ENCODE measurements at regions of chr3 and their contacts with region 1.

Region 1: GRCh38 chr3:27134165-27134796 is 234.9 kb downstream of the NEK10 start:
- DNase-seq: peak; percentile 43 to 53
- ATAC-seq: peak; percentile 79 to 86
- H3K4me3 ChIP-seq: no peak overlapping the region
- H3K27ac ChIP-seq: peak overlapping the region; percentile 16 to 54 (median 25)
- H3K4me1 ChIP-seq: peaks cover 9 to 10% of the 10 kb centered on the region in 2 donors
- H3K27me3 ChIP-seq: no peaks in the 10 kb centered on the region
- CTCF ChIP-seq: peak; percentile 64 to 89 (median 77)
- POLR2A ChIP-seq: no peak

Region 2: GRCh38 chr3:27253831-27254230 is 119.5 kb after region 1 on chr3:
- in situ Hi-C with region 1: no loop called
- intact Hi-C with region 1: loop called (anchors 2 kb)
- DNase-seq: no peak
- ATAC-seq: no peak
- H3K4me3 ChIP-seq: no peak overlapping the region
- H3K27ac ChIP-seq: no peak overlapping the region
- H3K4me1 ChIP-seq: no peaks in the 10 kb centered on the region
- H3K27me3 ChIP-seq: no peaks in the 10 kb centered on the region
- CTCF ChIP-seq: peak in 2 of 5 experiments; percentile 20 to 23
- POLR2A ChIP-seq: no peak

Region 3: DNA sequence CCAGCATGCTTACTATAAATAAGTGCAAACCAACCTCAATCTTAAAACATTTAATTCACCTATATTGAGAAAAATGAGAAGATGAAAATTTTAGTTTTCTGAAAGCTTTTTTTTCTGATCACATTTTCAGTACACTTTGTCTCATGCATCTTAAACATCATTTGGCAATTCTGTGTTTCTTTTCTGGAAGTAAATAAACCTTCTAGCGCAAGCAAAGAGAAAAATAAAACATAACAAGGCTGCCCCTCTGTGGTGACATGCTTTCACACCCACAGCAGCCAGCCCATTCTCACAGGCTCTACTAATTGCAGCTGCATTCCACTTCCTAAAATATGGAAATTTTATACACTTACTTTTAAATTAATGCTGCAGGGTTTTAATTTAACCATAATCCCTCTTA is 144.8 kb after region 1 on chr3:
- in situ Hi-C with region 1: loop called in 2 of 4 experiments (anchors 10 kb)
- intact Hi-C with region 1: loop called (anchors 2 kb)
- DNase-seq: no peak
- ATAC-seq: no peak
- H3K4me3 ChIP-seq: no peak overlapping the region
- H3K27ac ChIP-seq: no peak overlapping the region
- H3K4me1 ChIP-seq: no peaks in the 10 kb centered on the region
- H3K27me3 ChIP-seq: no peaks in the 10 kb centered on the region
- CTCF ChIP-seq: peak in 1 of 5 experiments; percentile 24
- POLR2A ChIP-seq: no peak

Region 4: GRCh38 chr3:27349832-27350231 is 215.6 kb after region 1 on chr3:
- in situ Hi-C with region 1: no loop called
- intact Hi-C with region 1: no loop called
- DNase-seq: no peak
- ATAC-seq: no peak
- H3K4me3 ChIP-seq: no peak overlapping the region
- H3K27ac ChIP-seq: peak overlapping the region in 2 of 4 donors; percentile 9 to 49
- H3K4me1 ChIP-seq: peaks cover 16 to 25% of the 10 kb centered on the region in 2 donors
- H3K27me3 ChIP-seq: no peaks in the 10 kb centered on the region
- CTCF ChIP-seq: no peak
- POLR2A ChIP-seq: no peak

Region 5: GRCh38 chr3:27467545-27467944 is 333.3 kb after region 1 on chr3:
- in situ Hi-C with region 1: loop called in 1 of 4 experiments (anchors 25 kb)
- intact Hi-C with region 1: no loop called
- DNase-seq: no peak
- ATAC-seq: peak; percentile 65 to 91
- H3K4me3 ChIP-seq: no peak overlapping the region
- H3K27ac ChIP-seq: peak overlapping the region in 1 of 4 donors; percentile 36
- H3K4me1 ChIP-seq: peaks cover 4 to 9% of the 10 kb centered on the region in 2 donors
- H3K27me3 ChIP-seq: no peaks in the 10 kb centered on the region
- CTCF ChIP-seq: peak; percentile 42 to 62 (median 44)
- POLR2A ChIP-seq: no peak

Region 6: DNA sequence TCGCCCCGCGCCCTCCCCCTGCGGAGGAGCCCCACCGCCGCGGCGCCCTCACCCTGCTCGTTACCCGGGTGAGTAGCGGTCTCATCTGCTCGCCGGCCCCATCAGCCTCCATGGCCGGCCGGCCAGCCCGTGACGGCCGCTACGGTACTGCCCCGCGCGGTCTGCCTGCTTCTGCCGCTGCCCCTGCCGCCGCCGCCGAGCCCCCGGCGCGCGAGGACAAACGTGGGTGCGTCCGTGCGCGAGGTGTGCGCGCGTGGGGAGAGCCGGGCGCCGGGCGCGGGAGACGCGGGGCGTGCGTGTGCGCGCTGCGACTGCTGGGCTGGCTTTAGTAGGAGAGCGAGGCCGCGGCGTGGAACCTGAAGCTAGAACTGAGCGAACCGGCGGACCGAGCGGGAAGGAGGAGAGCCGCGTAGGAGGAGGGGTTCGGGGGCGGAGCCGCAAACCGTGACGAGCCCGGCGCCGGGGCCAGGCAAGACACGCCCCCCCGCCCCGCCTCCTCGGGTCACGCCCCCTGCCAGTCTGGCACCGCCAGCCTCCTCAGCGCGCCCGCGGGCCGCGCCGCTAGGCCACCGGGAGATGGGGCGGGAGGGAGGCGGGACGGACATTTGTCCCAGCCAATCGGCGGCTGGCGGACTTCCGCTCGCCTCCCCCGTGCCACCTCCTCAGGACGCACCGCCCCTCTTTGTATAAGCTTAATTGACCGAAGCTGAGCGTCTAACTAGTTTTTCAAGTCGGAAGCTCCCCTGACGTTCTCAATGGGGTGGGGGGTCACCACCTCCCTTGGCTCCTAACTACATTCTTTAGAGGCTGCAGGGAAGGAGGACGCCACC is 349.9 kb after region 1 on chr3 and contains the start of gene SLC4A7:
- in situ Hi-C with region 1: no loop called
- intact Hi-C with region 1: loop called (anchors 10 kb)
- DNase-seq: peak; percentile 95 to 96
- ATAC-seq: peak; percentile 87
- H3K4me3 ChIP-seq: peak within 1 kb of the TSS; percentile 66 to 96 (median 80)
- H3K27ac ChIP-seq: peak within 1 kb of the TSS; percentile 80 to 96 (median 88)
- H3K4me1 ChIP-seq: peaks cover 9 to 28% of the 10 kb centered on the region in 2 donors
- H3K27me3 ChIP-seq: no peaks in the 10 kb centered on the region
- CTCF ChIP-seq: no peak
- POLR2A ChIP-seq: peak; percentile 94 to 97
- total RNA-seq, gene SLC4A7: 7.5 to 19.8 (median 12.8) TPM

Region 7: DNA sequence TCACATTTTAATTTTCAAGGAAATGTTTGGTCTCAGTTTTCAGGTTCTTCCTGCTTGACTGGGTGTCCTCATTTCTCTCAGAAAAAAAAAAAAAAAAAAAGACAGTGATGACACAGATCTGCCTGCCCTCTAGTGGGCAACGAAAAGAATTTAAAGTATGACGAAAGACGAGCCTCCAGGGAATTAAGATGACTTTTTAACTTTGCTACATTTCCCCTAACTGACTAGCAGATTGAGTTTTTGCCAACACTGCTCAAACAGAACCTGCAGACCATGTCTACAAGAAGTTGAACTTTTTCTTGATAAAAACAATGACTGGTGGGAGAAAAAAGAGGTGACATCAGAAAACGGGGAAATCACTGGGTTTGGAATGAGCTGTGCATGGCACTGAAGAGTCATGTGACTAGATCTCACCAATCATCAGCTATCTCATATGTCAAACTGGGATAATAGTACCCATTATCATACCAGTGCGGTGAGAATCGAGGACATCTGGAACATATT is 547.0 kb after region 1 on chr3:
- in situ Hi-C with region 1: loop called in 1 of 4 experiments (anchors 25 kb)
- intact Hi-C with region 1: no loop called
- DNase-seq: no peak
- ATAC-seq: peak in 1 of 2 donors; percentile 55
- H3K4me3 ChIP-seq: no peak overlapping the region
- H3K27ac ChIP-seq: no peak overlapping the region
- H3K4me1 ChIP-seq: peaks cover 0 to 3% of the 10 kb centered on the region in 2 donors
- H3K27me3 ChIP-seq: no peaks in the 10 kb centered on the region
- CTCF ChIP-seq: peak; percentile 27 to 52 (median 45)
- POLR2A ChIP-seq: no peak